Common myeloid progenitor, CD34-positive (primary cell): ENCODE measurements at regions of chr19 and their contacts with region 1.

Region 1: DNA sequence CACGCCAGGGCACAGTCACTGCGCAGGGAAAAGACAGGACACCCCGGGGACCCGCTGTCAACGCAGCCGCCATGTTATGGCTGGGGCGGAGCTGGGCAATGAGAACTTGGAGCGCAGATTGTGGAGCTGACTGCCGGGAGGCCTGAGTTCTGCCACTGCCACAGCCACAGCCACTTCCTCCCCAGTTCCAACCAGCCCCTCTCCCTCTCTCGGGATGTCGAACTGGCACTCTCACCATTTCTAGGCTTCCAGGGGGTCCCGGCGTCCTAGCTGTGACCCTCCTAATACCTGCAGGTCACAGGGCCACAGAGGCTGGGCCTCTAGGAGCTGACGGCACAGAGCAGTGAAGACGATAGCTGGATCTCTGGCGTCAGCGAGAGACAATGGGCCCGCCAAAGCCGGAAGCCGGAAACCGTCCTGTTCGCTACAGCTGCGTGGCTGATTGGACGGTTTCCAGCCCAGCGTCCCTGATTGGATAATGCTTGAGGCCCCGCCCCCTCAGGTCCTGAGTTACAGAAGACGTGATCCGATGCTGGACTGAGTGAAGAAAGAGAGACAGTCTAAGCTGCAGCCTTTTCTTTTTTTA is at the start of gene ZNF506:
- DNase-seq: peak; percentile 98 to 99 (median 99)
- H3K4me3 ChIP-seq: peak within 1 kb of the TSS; percentile 61 to 98 (median 91)
- H3K27ac ChIP-seq: peak within 1 kb of the TSS; percentile 93 to 98
- H3K4me1 ChIP-seq: peaks cover 0 to 7% (median 0%) of the 10 kb centered on the region in 4 experiments
- H3K27me3 ChIP-seq: no peaks in the 10 kb centered on the region

Region 2: GRCh38 chr19:19805480-19805879 is 16.0 kb before region 1 on chr19:
- CTCF ChIA-PET with region 1: no interaction called
- POLR2A ChIA-PET with region 1: no interaction called
- DNase-seq: no peak
- H3K4me3 ChIP-seq: no peak overlapping the region
- H3K27ac ChIP-seq: no peak overlapping the region
- H3K4me1 ChIP-seq: no peaks in the 10 kb centered on the region
- H3K27me3 ChIP-seq: no peaks in the 10 kb centered on the region

Region 3: DNA sequence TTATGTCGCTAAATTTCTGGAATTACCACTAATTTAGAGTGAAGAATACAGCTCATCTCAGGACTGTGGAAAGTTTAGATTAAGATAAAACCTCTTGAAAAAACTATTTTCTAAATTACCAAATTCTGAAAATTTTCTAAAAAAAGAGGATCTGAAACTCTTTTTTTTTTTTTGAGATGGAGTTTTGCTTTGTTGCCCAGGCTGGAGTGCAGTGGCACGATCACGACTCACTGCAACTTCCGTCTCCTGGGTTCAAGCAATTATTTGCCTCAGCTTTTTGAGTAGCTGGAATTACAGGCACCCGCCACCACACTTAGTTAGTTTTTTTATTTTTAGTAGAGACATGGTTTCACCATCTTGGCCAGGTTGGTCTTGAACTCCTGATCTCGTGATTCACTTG is 27.6 kb after region 1 on chr19:
- CTCF ChIA-PET with region 1: no interaction called
- POLR2A ChIA-PET with region 1: no interaction called
- DNase-seq: no peak
- H3K4me3 ChIP-seq: no peak overlapping the region
- H3K27ac ChIP-seq: no peak overlapping the region
- H3K4me1 ChIP-seq: peaks cover 0 to 12% (median 1%) of the 10 kb centered on the region in 4 experiments
- H3K27me3 ChIP-seq: no peaks in the 10 kb centered on the region

Region 4: GRCh38 chr19:19865739-19866481 is 44.5 kb after region 1 on chr19 and contains the start of gene ZNF253:
- CTCF ChIA-PET with region 1: interaction called, 3 read pairs
- POLR2A ChIA-PET with region 1: interaction called, 11 read pairs
- DNase-seq: peak; percentile 95 to 98 (median 98)
- H3K4me3 ChIP-seq: peak within 1 kb of the TSS; percentile 68 to 99 (median 93)
- H3K27ac ChIP-seq: peak within 1 kb of the TSS; percentile 88 to 95
- H3K4me1 ChIP-seq: peaks cover 0 to 17% (median 3%) of the 10 kb centered on the region in 4 experiments
- H3K27me3 ChIP-seq: peaks cover 0 to 3% (median 0%) of the 10 kb centered on the region in 5 experiments

Region 5: GRCh38 chr19:19900729-19901444 is 79.4 kb after region 1 on chr19 and contains the start of gene ZNF93:
- CTCF ChIA-PET with region 1: interaction called, 3 read pairs
- POLR2A ChIA-PET with region 1: interaction called, 12 read pairs
- DNase-seq: peak; percentile 95 to 98 (median 98)
- H3K4me3 ChIP-seq: peak within 1 kb of the TSS; percentile 79 to 98 (median 94)
- H3K27ac ChIP-seq: peak within 1 kb of the TSS; percentile 85 to 94
- H3K4me1 ChIP-seq: peaks cover 0 to 15% (median 6%) of the 10 kb centered on the region in 4 experiments
- H3K27me3 ChIP-seq: no peaks in the 10 kb centered on the region